ENCODE measurements at regions of chr2 and their contacts with region 1.

Region 1: GRCh38 chr2:221347471-221347870 is 224.6 kb downstream of the EPHA4 start:
- DNase-seq: peak in 1 of 2 experiments; percentile 67
- H3K4me3 ChIP-seq: no peak overlapping the region
- H3K27ac ChIP-seq: no peak overlapping the region
- H3K4me1 ChIP-seq: peaks cover 7% of the 10 kb centered on the region; the same call in 1 of the 2 replicates
- H3K27me3 ChIP-seq: no peaks in the 10 kb centered on the region
- CTCF ChIP-seq: no peak

Region 2: GRCh38 chr2:219428469-219428868 is 1919.0 kb before region 1 on chr2:
- CTCF ChIA-PET with region 1: no interaction called
- POLR2A ChIA-PET with region 1: interaction called, 10 read pairs
- intact Hi-C with region 1: no loop called
- DNase-seq: no peak
- H3K4me3 ChIP-seq: no peak overlapping the region
- H3K27ac ChIP-seq: no peak overlapping the region
- H3K4me1 ChIP-seq: peaks cover 4% of the 10 kb centered on the region; the same call in 1 of the 2 replicates
- H3K27me3 ChIP-seq: no peaks in the 10 kb centered on the region
- CTCF ChIP-seq: no peak